Activated CD4-positive, alpha-beta T cell treated with anti-CD3 and anti-CD28 coated beads, Interleukin-2, amount 10 ng/mL, durations not matched to agents 24 days and 14 days (primary cell): ENCODE measurements at regions of chr18 and their contacts with region 1.

Region 1: GRCh38 chr18:35497370-35498197 is at the start of gene INO80C:
- DNase-seq: peak; percentile 98
- H3K4me3 Mint-ChIP-seq: peak within 1 kb of the TSS; percentile 95
- H3K27ac Mint-ChIP-seq: peak within 1 kb of the TSS; percentile 99
- H3K4me1 Mint-ChIP-seq: peaks cover 32% of the 10 kb centered on the region
- H3K27me3 Mint-ChIP-seq: peaks cover 3% of the 10 kb centered on the region
- total RNA-seq, gene INO80C: 34.7 and 37.6 TPM in 2 replicates

Region 2: DNA sequence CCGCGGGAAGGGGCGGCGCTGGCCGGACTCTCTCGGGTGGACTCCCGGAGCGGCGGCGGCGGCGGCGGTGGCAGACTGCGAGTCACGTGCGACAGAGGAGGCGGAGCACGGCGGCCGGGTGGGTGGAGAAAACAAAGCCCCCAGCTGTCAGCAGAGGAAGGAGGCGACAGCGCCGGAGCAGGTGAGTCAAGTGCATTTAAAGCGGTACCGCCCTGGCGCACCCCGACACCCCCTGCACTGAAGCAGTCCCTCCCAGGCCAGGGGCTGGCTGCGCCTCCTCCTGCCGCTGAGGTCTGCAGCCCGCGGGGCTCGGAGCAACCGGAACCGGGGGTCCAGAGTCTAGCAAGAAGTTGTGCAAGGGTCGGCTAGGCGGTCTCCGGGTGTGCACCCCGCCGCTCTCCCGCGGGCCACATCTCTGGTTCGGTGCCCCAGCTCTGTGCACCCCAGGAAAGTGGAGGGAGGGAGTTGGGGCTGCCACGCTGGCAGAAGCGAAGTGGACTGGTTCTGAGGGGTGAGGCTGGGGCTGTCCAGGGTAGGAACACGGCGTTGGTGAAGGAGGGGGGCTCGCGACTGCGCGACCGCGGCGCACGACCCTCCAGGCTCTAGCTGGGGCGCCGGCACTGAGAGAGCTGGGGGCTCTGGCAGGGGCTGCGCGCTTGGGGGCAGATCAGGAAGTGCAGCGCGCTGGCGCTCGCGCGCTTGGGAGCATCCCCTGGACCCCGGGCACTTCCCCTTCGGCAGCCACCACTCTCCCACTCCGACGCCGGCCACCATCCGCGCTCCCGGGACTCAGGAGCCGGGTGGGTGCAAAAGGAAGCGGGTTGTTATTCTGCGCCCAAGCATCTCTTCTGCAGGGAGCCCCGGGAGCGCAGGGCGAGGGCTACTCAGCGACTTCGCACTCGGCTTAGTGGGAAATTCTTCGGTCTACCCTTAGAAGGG is 520.4 kb before region 1 on chr18:
- intact Hi-C with region 1: loop called (anchors 2 kb)
- DNase-seq: peak; percentile 90
- H3K4me3 Mint-ChIP-seq: peak overlapping the region; percentile 82
- H3K27ac Mint-ChIP-seq: no peak overlapping the region
- H3K4me1 Mint-ChIP-seq: peaks cover 23% of the 10 kb centered on the region
- H3K27me3 Mint-ChIP-seq: peaks cover 39% of the 10 kb centered on the region

Region 3: DNA sequence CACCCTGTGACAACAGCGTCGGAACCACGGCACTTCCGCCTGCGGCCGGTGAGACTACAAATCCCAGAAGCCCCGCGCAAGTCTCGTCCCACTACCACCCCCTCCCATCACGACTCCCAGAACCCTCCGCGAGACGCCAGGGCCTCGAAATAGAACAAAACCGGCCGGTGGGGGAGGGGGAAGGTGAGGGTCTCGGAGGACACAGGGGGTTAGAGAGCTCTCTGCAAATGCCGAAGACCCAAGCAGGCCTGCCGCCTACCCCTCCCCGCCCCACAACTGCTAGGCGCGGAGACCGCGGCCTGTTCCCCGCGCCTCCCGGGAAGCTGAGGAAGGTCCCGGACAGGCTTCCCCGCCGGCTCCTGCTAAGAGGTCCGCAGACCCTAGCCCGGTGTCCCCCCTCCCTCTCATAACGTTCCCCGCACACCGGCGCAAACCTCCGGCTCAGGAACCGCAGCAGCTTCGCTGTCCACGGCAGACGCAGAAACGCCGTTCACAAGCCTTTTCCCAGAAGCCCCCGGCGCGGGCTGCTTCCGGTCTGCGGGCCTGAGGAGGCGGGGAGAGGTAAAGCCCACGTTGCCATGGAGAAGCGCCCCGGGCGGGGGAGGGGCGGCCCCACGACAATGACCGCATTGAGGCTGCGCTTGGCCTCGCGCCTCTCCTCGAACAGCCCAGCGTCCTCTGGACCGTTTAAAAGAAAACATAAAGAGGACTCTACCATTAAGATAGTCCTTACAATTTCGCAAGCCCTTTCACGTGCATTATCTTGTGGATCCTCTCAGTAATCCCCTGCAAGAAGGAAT is 153.4 kb before region 1 on chr18 and contains the start of gene ZNF24:
- intact Hi-C with region 1: loop called (anchors 1 kb)
- DNase-seq: peak; percentile 98
- H3K4me3 Mint-ChIP-seq: peak within 1 kb of the TSS; percentile 100
- H3K27ac Mint-ChIP-seq: peak within 1 kb of the TSS; percentile 94
- H3K4me1 Mint-ChIP-seq: peaks cover 33% of the 10 kb centered on the region
- H3K27me3 Mint-ChIP-seq: peaks cover 1% of the 10 kb centered on the region
- total RNA-seq, gene ZNF24: 53.9 and 57.8 TPM in 2 replicates

Region 4: GRCh38 chr18:35478520-35479435 is 18.8 kb before region 1 on chr18:
- intact Hi-C with region 1: loop called (anchors 2 kb)
- DNase-seq: no peak
- H3K4me3 Mint-ChIP-seq: peak overlapping the region; percentile 1
- H3K27ac Mint-ChIP-seq: peak overlapping the region; percentile 38
- H3K4me1 Mint-ChIP-seq: peaks cover 24% of the 10 kb centered on the region
- H3K27me3 Mint-ChIP-seq: no peaks in the 10 kb centered on the region

Region 5: DNA sequence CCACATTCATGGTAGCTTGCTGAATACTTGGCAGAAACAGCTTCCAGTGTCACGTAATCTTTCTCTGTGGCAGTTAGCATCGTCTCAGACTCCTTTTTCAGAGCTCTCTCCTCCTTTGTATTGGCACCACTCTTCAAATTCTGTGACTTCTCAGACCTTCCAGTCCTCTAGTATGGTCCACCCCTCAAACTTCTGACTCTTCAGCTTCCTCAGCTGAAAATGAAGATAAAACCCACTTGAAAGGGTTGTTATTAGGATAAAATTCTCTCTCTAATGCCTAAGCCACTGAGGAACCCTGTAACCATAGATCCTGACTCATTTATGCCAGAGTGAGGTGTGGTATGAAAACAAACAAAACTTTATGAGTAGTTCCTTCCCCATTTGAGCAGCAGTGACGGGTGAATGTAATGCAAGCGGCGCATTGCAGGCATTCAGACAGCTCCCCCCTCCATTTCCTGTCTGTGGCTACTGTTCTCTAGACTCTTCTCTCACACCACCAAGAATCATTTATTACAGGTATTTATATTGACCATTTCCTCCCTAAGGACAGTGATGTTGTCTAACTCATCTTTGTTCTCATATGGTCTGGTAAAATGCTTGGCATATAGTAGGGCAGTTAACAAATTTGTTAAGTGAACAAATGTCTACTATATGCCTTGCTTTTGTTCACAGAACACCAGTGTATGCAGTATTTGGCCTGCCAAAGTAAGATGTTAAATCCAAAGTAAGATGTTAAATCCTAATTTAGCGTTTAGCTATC is 119.3 kb after region 1 on chr18:
- intact Hi-C with region 1: loop called (anchors 2 kb)
- DNase-seq: peak; percentile 85
- H3K4me3 Mint-ChIP-seq: no peak overlapping the region
- H3K27ac Mint-ChIP-seq: no peak overlapping the region
- H3K4me1 Mint-ChIP-seq: peaks cover 2% of the 10 kb centered on the region
- H3K27me3 Mint-ChIP-seq: no peaks in the 10 kb centered on the region